Sciatic nerve (tissue), 2 donors: ENCODE measurements at regions of chr1 and their contacts with region 1.

Region 1: DNA sequence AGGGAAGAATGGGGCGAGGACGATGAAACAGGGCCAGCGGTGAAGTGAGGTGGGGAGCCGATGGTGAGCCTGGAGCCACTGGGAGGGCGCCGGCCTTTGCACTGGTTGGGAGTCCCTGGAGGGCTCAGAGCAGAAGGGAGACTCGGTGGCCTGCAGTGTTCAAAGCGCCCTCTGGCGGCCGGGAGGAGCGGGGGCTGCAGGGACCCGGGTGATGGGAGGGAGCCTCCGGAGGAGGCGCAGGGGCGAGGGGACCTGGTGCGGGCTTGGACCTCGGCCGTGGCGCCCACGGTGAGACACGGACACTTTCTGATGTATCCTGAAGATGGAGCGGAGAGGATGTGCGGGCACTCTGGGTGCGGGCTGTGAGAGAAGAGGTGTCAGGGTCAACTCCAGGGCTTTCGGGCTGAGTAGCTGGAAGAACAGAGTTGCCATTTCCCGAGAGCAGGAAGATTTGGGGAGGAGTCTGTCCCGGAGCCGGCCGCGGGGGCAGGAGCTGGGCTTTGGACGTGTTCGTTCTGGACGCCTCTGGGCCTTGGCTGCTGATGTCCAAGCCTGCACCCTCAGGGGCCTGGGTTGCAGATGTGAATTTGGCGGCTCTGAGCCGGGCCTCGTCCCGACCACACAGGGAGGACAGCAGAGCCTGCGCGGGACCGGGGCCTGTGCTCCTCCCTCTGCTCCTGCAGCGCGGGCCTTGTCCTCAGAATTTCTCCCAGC is 29.7 kb downstream of the HEYL start:
- DNase-seq: peak; percentile 76
- ATAC-seq: peak; percentile 95

Region 2: DNA sequence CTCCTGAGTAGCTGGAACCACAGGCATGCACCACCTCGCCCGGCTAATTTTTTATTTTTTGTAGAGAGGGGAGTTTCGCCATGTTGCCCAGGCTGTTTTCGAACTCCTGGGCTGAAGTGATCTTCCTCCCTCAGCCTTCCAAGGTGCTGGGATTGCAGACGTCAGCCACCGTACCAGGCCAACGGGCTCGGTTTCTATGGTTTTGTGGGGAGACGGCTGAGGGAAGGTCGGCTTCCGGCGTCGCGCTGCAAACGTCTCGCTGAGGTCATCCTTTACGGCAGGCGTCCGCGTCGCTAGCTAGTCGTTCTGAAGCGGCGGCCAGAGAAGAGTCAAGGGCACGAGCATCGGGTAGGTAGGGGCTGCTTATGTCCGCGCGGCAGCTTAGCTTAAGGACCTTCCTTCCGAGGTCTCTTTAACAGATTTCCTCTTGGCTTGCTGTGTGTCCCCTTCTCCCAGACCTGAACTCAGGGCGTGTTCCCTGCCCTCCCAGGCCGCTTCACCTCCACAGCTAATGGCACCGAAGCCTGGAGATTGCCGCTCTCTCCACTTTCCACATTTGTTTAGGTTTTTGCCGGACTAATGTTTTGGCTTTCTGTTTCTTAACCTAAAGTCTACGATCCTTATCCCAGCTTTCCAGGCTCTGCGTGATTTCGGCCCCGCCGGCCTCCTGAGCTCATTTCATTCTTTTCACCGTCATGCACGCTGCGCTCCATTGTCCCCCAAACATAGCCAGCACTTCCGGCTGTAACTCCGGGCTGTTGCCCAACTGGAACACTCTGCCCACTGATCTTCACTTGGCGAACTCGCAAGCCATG is 583.5 kb before region 1 on chr1 and contains the start of gene NDUFS5:
- intact Hi-C with region 1: no loop called
- DNase-seq: peak; percentile 93
- ATAC-seq: peak; percentile 98
- total RNA-seq, gene NDUFS5: 149 TPM

Region 3: DNA sequence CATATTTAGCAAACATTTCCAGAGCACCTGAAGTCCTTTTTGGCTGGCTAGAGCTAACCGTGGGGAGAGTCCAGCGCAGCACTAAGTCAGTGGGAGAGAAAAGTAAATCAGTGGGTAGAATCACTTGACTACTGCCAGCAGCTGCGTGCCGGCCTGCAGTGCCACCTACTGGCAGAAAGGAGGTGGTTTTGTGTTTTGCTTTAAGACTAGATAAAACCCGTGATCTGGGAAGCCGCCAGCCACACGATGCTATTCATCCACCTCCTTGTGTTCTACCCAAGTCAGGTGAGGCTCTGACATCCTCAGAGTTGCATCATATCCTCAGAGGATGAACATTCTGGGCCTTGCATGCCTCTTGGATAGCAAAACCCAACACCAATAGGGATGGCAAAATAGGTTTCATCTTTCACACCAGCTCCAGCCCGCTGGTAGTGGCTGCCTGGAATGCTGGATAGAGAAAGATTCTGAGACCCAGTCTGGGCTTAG is 43.8 kb after region 1 on chr1:
- intact Hi-C with region 1: loop called (anchors 5 kb)
- DNase-seq: peak; percentile 91
- ATAC-seq: peak; percentile 82

Region 4: GRCh38 chr1:39666772-39667171 is 57.0 kb after region 1 on chr1:
- intact Hi-C with region 1: no loop called
- DNase-seq: no peak
- ATAC-seq: no peak

Region 5: GRCh38 chr1:39720094-39720999 is 110.6 kb after region 1 on chr1:
- intact Hi-C with region 1: loop called (anchors 10 kb)
- DNase-seq: no peak
- ATAC-seq: no peak